Activated naive CD4-positive, alpha-beta T cell treated with anti-CD3 and anti-CD28 coated beads for 36 hours (primary cell): ENCODE measurements at regions of chr1 and their contacts with region 1.

Region 1: DNA sequence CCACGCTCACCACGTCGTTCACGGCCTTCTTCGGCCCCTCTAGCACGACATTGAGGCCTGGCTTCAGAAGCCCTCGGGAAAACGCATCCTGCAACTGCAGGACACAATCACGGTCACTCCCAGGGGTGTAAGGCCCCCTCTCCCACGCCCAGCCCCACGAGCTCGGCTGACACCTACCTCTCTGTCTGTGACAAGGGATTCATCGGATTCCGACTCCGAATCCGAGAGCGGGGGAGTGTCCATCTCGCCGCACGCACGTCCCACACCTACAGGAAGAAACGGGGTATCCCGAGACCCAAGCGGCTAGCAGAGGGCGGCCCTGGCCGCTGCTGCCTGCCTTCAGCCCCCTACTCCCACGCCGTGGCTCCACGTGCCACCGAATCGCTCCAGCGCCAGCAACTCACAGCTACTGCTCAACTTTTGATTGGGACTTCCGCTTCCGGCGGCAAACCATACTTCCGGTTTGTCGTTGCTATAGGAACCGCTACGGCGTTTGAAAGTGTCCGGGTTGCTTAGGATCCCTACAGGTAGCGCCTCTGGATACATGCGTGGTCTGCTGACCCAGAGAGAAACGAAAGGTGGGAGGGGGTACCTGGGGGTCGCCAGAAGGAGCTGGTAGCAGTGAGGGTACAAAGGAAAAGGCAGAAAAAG is at the starts of genes CFAP57 and EBNA1BP2:
- DNase-seq: peak; percentile 96
- H3K4me3 Mint-ChIP-seq: peak within 1 kb of the TSS; percentile 99
- H3K27ac Mint-ChIP-seq: peak within 1 kb of the TSS; percentile 90
- H3K4me1 Mint-ChIP-seq: peaks cover 39% of the 10 kb centered on the region
- H3K27me3 Mint-ChIP-seq: peaks cover 2% of the 10 kb centered on the region
- total RNA-seq, gene CFAP57: 0.12 to 0.14 TPM
- total RNA-seq, gene EBNA1BP2: 88.0 to 88.3 TPM

Region 2: GRCh38 chr1:42924082-42924850 is 247.7 kb before region 1 on chr1:
- CTCF ChIA-PET with region 1: no interaction called
- intact Hi-C with region 1: loop called (anchors 2 kb)
- DNase-seq: peak; percentile 95
- H3K4me3 Mint-ChIP-seq: peak overlapping the region; percentile 92
- H3K27ac Mint-ChIP-seq: peak overlapping the region; percentile 88
- H3K4me1 Mint-ChIP-seq: peaks cover 23% of the 10 kb centered on the region
- H3K27me3 Mint-ChIP-seq: no peaks in the 10 kb centered on the region

Region 3: GRCh38 chr1:43389326-43390313 is 217.6 kb after region 1 on chr1 and contains the starts of genes MED8 and SZT2:
- CTCF ChIA-PET with region 1: no interaction called
- intact Hi-C with region 1: loop called (anchors 1 kb)
- DNase-seq: peak; percentile 96
- H3K4me3 Mint-ChIP-seq: peak within 1 kb of the TSS; percentile 95
- H3K27ac Mint-ChIP-seq: peak within 1 kb of the TSS; percentile 94
- H3K4me1 Mint-ChIP-seq: peaks cover 40% of the 10 kb centered on the region
- H3K27me3 Mint-ChIP-seq: no peaks in the 10 kb centered on the region
- total RNA-seq, gene MED8: 45.8 to 45.9 TPM
- total RNA-seq, gene SZT2: 26.6 to 28.2 TPM